Psoas muscle (tissue), 8 donors: ENCODE measurements at regions of chr4 and their contacts with region 1.

Region 1: GRCh38 chr4:52038103-52038912 is at the start of gene SGCB:
- DNase-seq: peak; percentile 71 to 85
- ATAC-seq: peak; percentile 87 to 92 (median 91)
- H3K4me3 ChIP-seq: peak within 1 kb of the TSS; percentile 90
- H3K27ac ChIP-seq: peak within 1 kb of the TSS; percentile 87
- H3K4me1 ChIP-seq: peaks cover 28% of the 10 kb centered on the region
- H3K27me3 ChIP-seq: peaks cover 0 to 3% (median 2%) of the 10 kb centered on the region in 3 donors
- CTCF ChIP-seq: no peak
- total RNA-seq, gene SGCB: 51.4 to 83.8 (median 78.6) TPM

Region 2: DNA sequence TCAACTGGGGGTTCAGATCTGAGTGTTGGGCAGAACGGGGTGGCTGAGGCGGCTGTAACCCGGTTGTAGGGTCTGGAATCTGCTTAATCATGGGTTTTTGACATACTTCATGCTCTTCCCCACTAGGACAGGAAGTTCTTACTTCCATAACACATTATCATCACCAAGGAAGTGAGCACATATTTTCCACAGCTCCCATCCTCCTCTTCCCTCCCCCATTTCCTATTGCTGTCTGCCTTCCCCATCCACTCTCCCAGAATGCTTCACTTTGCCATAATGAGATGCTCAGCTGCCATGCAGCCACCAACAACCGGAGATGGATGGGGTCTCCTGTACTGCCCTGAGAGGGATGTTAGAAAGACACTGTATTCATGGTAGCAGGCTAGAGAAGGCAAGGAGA is 201.8 kb before region 1 on chr4:
- intact Hi-C with region 1: loop called (anchors 5 kb)
- DNase-seq: no peak
- ATAC-seq: no peak
- H3K4me3 ChIP-seq: no peak overlapping the region
- H3K27ac ChIP-seq: no peak overlapping the region
- H3K4me1 ChIP-seq: no peaks in the 10 kb centered on the region
- H3K27me3 ChIP-seq: no peaks in the 10 kb centered on the region
- CTCF ChIP-seq: no peak

Region 3: GRCh38 chr4:51842554-51843308 is 195.6 kb before region 1 on chr4 and contains the start of gene DCUN1D4:
- intact Hi-C with region 1: loop called (anchors 5 kb)
- DNase-seq: peak; percentile 100
- ATAC-seq: peak; percentile 90 to 96 (median 92)
- H3K4me3 ChIP-seq: peak within 1 kb of the TSS; percentile 96
- H3K27ac ChIP-seq: peak within 1 kb of the TSS; percentile 95
- H3K4me1 ChIP-seq: peaks cover 18% of the 10 kb centered on the region
- H3K27me3 ChIP-seq: no peaks in the 10 kb centered on the region
- CTCF ChIP-seq: peak; percentile 40
- total RNA-seq, gene DCUN1D4: 24.0 to 43.1 (median 31.1) TPM

Region 4: GRCh38 chr4:52001616-52002015 is 36.7 kb before region 1 on chr4:
- intact Hi-C with region 1: loop called in 1 of 2 experiments (anchors 5 kb)
- DNase-seq: no peak
- ATAC-seq: no peak
- H3K4me3 ChIP-seq: no peak overlapping the region
- H3K27ac ChIP-seq: no peak overlapping the region
- H3K4me1 ChIP-seq: no peaks in the 10 kb centered on the region
- H3K27me3 ChIP-seq: no peaks in the 10 kb centered on the region
- CTCF ChIP-seq: no peak

Region 5: GRCh38 chr4:52091535-52092200 is 53.4 kb after region 1 on chr4:
- intact Hi-C with region 1: no loop called
- DNase-seq: no peak
- ATAC-seq: no peak
- H3K4me3 ChIP-seq: no peak overlapping the region
- H3K27ac ChIP-seq: no peak overlapping the region
- H3K4me1 ChIP-seq: no peaks in the 10 kb centered on the region
- H3K27me3 ChIP-seq: no peaks in the 10 kb centered on the region
- CTCF ChIP-seq: no peak

Region 6: DNA sequence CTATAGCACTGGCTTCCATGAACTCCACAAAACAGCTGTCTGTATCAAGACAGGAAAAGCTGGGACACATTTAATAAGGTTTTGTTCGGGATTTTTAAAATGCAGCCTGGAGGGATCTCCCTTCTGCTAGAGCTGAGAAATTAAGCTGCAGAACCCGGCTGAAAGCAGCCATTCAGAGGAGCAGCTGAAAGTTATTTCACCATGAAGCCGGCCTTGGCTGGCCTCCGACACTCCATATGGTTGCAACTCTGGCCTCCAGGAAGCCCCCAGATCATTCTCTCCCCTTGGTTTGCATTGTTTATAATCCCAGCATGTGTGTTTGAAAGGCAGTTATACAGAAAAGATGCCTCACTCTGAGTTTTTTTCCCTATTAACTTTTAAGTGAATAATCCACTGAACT is 252.2 kb after region 1 on chr4:
- intact Hi-C with region 1: no loop called
- DNase-seq: no peak
- ATAC-seq: no peak
- H3K4me3 ChIP-seq: no peak overlapping the region
- H3K27ac ChIP-seq: no peak overlapping the region
- H3K4me1 ChIP-seq: no peaks in the 10 kb centered on the region
- H3K27me3 ChIP-seq: no peaks in the 10 kb centered on the region
- CTCF ChIP-seq: no peak